A673 (cell line): ENCODE measurements at regions of chr3 and their contacts with region 1.

Region 1: DNA sequence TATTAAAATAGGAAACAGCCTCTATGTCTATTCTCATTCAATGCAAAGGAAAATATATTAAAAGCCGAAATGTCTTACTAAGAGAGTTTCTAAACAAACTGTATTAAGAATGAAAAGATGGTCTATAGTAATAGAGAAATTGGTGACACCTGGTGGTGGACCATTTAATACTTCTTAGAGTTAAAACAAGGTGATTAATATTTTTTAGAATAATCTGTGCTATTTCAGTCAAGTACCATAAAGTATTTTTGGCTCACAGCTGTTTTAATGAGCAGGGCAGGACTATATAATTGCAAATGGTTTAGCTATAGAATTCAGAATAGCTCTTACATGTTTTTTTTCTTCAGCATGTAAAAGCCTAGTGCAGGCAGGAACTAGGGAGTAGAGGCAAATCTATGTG is 55.7 kb downstream of the SYNPR start:
- DNase-seq: no peak
- H3K4me3 ChIP-seq: no peak overlapping the region
- H3K27ac ChIP-seq: no peak overlapping the region
- H3K4me1 ChIP-seq: no peaks in the 10 kb centered on the region
- H3K27me3 ChIP-seq: no peaks in the 10 kb centered on the region
- CTCF ChIP-seq: peak; percentile 42

Region 2: GRCh38 chr3:62622553-62623193 is 711.2 kb before region 1 on chr3:
- CTCF ChIA-PET with region 1: no interaction called
- POLR2A ChIA-PET with region 1: no interaction called
- intact Hi-C with region 1: loop called (anchors 10 kb)
- DNase-seq: peak; percentile 48
- H3K4me3 ChIP-seq: no peak overlapping the region
- H3K27ac ChIP-seq: no peak overlapping the region
- H3K4me1 ChIP-seq: no peaks in the 10 kb centered on the region
- H3K27me3 ChIP-seq: no peaks in the 10 kb centered on the region
- CTCF ChIP-seq: peak; percentile 53

Region 3: DNA sequence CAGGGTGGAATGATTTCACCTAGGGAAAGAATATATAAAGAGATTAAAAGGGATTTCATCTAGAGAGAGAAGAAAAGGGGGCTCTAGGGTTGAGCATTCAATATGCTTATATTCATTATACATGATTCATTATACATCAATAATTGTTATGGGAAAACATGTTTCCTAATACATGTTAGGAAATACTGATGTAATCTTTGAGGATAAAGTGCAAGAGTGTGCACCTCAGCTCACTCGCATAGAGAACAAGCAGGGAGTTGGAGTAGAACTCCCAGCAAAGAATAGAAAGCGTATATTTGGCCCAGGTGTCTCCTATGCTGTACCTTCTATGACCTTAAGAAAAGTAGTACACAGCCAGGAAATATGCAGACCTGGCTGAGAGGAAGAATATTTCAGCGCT is 112.6 kb before region 1 on chr3:
- CTCF ChIA-PET with region 1: no interaction called
- POLR2A ChIA-PET with region 1: no interaction called
- intact Hi-C with region 1: no loop called
- DNase-seq: no peak
- H3K4me3 ChIP-seq: no peak overlapping the region
- H3K27ac ChIP-seq: no peak overlapping the region
- H3K4me1 ChIP-seq: no peaks in the 10 kb centered on the region
- H3K27me3 ChIP-seq: no peaks in the 10 kb centered on the region
- CTCF ChIP-seq: no peak

Region 4: DNA sequence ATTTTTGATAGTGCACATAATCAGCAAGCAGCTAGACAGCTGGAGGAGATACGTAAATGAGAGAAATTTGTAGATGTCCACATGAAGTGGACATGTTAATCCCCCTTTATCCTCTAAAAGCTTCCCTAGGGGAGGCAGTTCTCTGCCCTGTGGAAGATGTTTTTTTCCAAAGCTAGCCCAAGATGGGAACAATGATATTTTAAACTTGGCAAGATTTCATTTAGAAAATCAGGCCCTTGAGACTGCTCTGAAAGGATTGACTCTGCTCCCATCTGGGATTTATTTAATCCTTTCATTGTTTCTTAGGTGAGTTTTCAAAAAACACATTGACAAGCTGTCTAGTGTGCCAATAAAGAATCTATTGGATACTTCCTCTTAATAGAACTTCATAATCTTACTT is 36.3 kb after region 1 on chr3:
- CTCF ChIA-PET with region 1: no interaction called
- POLR2A ChIA-PET with region 1: no interaction called
- intact Hi-C with region 1: no loop called
- DNase-seq: peak; percentile 68
- H3K4me3 ChIP-seq: no peak overlapping the region
- H3K27ac ChIP-seq: no peak overlapping the region
- H3K4me1 ChIP-seq: peaks cover 12% of the 10 kb centered on the region
- H3K27me3 ChIP-seq: no peaks in the 10 kb centered on the region
- CTCF ChIP-seq: no peak